Activated CD4-positive, alpha-beta T cell treated with anti-CD3 and anti-CD28 coated beads, Interleukin-2, amount 10 ng/mL, durations not matched to agents 24 days and 14 days (primary cell): ENCODE measurements at regions of chr12 and their contacts with region 1.

Region 1: DNA sequence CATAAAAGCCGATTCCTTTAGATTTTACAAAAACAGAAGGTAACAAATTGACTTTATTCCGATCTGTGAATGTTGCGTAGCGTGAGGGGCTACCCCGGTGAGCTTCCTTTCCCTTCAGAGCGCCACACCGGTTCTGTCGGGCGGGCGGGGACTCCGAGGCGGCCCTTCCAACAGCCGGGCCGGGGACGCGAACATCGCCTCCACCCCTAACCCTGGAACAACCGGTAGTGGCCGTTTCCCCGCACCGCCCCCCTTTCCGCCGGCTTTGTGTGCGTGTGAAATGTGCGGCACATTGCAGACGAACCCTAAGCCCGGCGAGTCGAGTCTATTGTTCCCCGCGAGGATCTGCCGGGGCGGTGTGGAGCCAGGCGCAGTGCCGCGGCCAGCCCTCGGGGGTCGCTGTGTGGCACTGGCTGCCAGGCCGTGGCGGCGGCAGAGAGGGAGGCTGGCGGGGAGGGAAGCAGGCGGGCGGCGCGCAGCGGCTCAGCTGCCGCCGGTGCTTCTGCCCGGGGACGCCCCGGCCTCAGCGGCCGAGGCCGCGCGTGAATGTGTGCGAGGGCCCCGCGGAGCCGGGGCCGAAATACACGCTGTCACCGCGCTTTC is 775 bp upstream of the ARID2 start:
- DNase-seq: peak; percentile 99
- H3K4me3 Mint-ChIP-seq: peak overlapping the region; percentile 91
- H3K27ac Mint-ChIP-seq: peak overlapping the region; percentile 99
- H3K4me1 Mint-ChIP-seq: peaks cover 27% of the 10 kb centered on the region
- H3K27me3 Mint-ChIP-seq: no peaks in the 10 kb centered on the region

Region 2: DNA sequence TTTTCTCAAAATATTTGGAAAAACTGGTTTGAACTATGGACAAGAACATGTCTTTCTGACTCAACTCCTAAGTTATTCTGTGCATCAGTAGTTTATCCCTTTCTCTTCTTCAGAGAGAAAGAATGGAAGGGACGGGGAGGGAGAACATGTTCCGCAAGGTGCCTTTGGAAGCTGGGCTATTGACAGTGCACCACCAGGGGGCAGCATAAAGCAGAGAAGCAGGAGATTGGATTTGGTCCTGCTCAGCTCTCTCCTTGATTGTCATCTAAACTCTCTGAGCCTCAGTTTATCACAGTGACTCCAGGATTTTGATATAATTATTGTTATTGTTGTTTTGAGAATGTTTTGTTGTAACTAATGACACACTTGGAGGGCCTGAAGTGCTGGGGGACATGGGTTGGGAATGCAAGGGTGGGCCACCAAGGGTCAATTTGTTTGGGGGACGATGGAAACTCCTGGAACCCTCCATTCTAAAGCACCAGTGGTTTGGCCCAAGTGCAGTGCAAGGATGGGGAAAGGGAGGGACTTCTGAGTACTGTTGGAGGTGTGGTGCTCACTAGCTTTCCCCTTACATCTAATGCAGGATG is 558.2 kb before region 1 on chr12:
- intact Hi-C with region 1: loop called (anchors 5 kb)
- DNase-seq: peak; percentile 92
- H3K4me3 Mint-ChIP-seq: no peak overlapping the region
- H3K27ac Mint-ChIP-seq: no peak overlapping the region
- H3K4me1 Mint-ChIP-seq: no peaks in the 10 kb centered on the region
- H3K27me3 Mint-ChIP-seq: peaks cover 4% of the 10 kb centered on the region

Region 3: DNA sequence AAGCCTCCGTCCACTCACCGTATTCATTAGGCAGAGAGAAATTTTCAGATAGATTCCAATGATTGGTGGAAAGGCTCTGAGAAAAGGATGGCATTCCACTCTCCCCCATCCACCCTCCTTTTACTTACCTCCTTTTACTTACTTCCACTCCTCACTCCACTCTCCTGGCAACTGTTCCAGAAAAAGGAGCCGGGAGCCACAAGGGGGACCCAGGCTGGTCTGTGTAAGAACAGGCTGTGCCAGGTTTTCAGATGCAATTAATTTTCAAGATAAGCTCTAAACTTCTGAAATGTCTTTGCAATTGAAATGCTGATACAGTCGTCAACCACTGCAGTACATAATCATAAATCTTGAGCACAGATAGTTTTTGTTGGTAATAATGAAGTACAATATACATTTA is 264.0 kb before region 1 on chr12:
- intact Hi-C with region 1: no loop called
- DNase-seq: no peak
- H3K4me3 Mint-ChIP-seq: no peak overlapping the region
- H3K27ac Mint-ChIP-seq: no peak overlapping the region
- H3K4me1 Mint-ChIP-seq: peaks cover 1% of the 10 kb centered on the region
- H3K27me3 Mint-ChIP-seq: peaks cover 14% of the 10 kb centered on the region

Region 4: DNA sequence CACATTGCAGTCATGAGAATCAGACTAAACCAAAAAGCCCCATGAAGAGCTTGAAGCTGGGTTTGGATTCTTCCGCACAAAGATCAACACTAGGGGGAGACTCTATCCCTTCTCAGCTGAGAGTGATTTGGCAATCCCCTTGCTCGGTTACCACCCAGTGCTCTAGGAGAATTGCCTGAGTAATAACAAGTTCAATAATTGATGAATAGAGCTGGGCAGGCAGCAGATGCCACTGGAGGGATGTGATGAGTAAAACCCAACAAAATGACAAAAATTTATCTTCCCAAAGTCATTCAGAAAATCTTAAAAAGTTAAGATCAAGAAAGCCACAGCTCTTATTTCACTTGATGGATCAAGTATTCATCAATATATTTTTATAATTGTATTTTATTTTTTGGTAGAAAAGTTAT is 184.8 kb before region 1 on chr12:
- intact Hi-C with region 1: loop called (anchors 1 kb)
- DNase-seq: peak; percentile 90
- H3K4me3 Mint-ChIP-seq: no peak overlapping the region
- H3K27ac Mint-ChIP-seq: no peak overlapping the region
- H3K4me1 Mint-ChIP-seq: peaks cover 4% of the 10 kb centered on the region
- H3K27me3 Mint-ChIP-seq: peaks cover 24% of the 10 kb centered on the region

Region 5: DNA sequence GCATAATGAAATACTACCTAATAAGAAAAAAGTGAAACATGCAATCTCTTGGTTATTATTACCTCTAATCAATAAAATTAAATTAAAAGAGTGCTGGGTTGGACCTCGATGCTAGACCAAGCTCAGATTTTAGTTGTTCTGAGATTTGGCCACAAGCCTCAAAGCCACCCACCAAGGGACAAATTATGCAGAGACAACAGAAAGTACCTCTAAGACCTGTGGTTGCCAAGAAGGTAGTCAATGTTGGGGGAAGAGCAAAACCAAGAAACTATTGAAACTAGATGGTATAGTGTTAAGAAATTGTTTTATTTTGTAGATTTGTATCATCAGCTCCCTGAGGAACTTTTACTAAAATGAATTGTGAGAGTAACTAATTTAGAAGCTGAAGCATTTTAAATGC is 43.1 kb before region 1 on chr12:
- intact Hi-C with region 1: loop called (anchors 2 kb)
- DNase-seq: no peak
- H3K4me3 Mint-ChIP-seq: no peak overlapping the region
- H3K27ac Mint-ChIP-seq: no peak overlapping the region
- H3K4me1 Mint-ChIP-seq: peaks cover 11% of the 10 kb centered on the region
- H3K27me3 Mint-ChIP-seq: peaks cover 24% of the 10 kb centered on the region

Region 6: GRCh38 chr12:46217541-46218321 is 489.0 kb after region 1 on chr12:
- intact Hi-C with region 1: loop called (anchors 2 kb)
- DNase-seq: peak; percentile 92
- H3K4me3 Mint-ChIP-seq: peak overlapping the region; percentile 79
- H3K27ac Mint-ChIP-seq: peak overlapping the region; percentile 98
- H3K4me1 Mint-ChIP-seq: peaks cover 88% of the 10 kb centered on the region
- H3K27me3 Mint-ChIP-seq: no peaks in the 10 kb centered on the region

Region 7: GRCh38 chr12:47705566-47706425 is 1977.1 kb after region 1 on chr12 and contains the start of gene RPAP3:
- intact Hi-C with region 1: loop called (anchors 5 kb)
- DNase-seq: peak; percentile 99
- H3K4me3 Mint-ChIP-seq: peak within 1 kb of the TSS; percentile 97
- H3K27ac Mint-ChIP-seq: peak within 1 kb of the TSS; percentile 99
- H3K4me1 Mint-ChIP-seq: peaks cover 53% of the 10 kb centered on the region
- H3K27me3 Mint-ChIP-seq: no peaks in the 10 kb centered on the region
- total RNA-seq, gene RPAP3: 63.4 and 67.3 TPM in 2 replicates